Natural killer cell (primary cell): ENCODE measurements at regions of chr17 and their contacts with region 1.

Region 1: DNA sequence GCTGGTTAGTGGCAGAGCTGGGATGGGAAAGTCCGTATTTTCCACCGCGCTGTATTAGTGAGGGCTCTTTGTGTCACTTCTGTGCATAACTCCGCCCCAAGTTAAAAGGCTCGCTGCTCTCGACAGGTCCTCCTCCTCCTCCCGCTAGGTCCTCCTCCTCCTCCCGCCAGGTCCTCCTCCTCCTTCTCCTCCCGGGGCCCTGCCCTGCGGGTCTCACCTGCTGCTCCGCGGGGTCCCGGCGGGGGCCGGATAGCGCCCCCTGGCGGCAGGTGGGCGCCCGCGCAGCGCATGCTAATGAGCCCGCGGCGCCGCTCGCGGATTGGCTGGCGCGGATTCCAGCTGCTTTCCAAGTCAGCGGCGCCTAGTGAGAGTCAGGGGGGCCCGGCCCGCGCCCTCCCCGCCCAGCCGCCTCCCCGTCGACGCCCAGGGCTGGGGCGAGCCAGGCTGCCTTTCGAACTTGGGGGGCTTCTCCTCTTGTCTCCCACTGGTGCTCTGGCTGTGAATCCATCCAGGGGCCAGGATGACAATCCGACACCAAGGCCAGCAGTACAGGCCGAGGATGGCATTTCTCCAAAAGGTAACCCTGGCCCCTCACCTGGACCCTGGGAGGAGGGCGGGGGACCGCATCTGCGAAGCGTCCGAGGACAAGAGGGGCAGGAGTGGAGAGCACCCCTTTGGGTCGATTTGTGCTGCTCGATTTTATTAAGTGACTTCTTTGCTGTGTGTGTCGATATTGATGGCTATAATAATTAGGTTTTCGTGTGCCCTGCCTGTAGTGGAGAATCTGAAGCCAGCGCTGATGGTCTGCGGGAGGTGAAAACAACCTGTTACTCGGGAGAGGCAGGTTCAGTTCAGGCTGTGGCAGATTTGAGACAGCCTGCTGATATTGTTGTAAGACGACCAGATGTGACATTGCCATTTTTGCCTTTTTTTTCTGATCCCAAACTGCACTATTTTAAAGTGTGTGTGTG is at the start of gene RGS9:
- DNase-seq: peak; percentile 89 to 93
- ATAC-seq: peak; percentile 98 to 99 (median 98)
- H3K4me3 ChIP-seq: peak within 1 kb of the TSS; percentile 64
- H3K4me3 Mint-ChIP-seq: peak within 1 kb of the TSS; percentile 97
- H3K27ac ChIP-seq: peak within 1 kb of the TSS; percentile 32
- H3K27ac Mint-ChIP-seq: peak within 1 kb of the TSS; percentile 83 to 89
- H3K4me1 ChIP-seq: peaks cover 35% of the 10 kb centered on the region
- H3K4me1 Mint-ChIP-seq: peaks cover 34 to 49% of the 10 kb centered on the region in 2 donors
- H3K27me3 ChIP-seq: no peaks in the 10 kb centered on the region
- H3K27me3 Mint-ChIP-seq: peaks cover 8 to 9% of the 10 kb centered on the region in 2 donors
- CTCF ChIP-seq: peak; percentile 96
- total RNA-seq, gene RGS9: 25.0 to 47.3 (median 37.2) TPM

Region 2: DNA sequence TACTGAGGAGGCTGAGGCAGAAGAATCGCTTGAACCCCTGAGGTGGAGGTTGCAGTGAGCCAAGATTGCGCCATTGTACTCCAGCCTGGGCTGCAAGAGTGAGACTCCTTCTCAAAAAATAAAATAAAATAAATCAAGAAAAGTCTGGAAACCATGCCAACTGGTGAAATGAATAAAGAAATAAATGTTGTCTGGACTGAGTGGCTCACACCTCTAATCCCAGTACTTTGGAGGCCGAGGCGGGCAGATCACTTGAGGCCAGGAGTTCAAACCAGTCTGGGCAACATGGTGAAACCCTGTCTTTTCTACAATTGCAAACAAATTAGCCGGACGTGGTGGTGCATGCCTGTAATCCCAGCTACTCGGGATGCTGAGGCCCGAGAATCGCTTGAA is 217.3 kb before region 1 on chr17:
- intact Hi-C with region 1: loop called (anchors 1 kb)
- DNase-seq: no peak
- ATAC-seq: no peak
- H3K4me3 ChIP-seq: peak overlapping the region; percentile 76
- H3K4me3 Mint-ChIP-seq: peak overlapping the region; percentile 88
- H3K27ac ChIP-seq: peak overlapping the region; percentile 86
- H3K27ac Mint-ChIP-seq: peak overlapping the region; percentile 85 to 90
- H3K4me1 ChIP-seq: peaks cover 9% of the 10 kb centered on the region
- H3K4me1 Mint-ChIP-seq: no peaks in the 10 kb centered on the region
- H3K27me3 ChIP-seq: no peaks in the 10 kb centered on the region
- H3K27me3 Mint-ChIP-seq: no peaks in the 10 kb centered on the region
- CTCF ChIP-seq: no peak

Region 3: DNA sequence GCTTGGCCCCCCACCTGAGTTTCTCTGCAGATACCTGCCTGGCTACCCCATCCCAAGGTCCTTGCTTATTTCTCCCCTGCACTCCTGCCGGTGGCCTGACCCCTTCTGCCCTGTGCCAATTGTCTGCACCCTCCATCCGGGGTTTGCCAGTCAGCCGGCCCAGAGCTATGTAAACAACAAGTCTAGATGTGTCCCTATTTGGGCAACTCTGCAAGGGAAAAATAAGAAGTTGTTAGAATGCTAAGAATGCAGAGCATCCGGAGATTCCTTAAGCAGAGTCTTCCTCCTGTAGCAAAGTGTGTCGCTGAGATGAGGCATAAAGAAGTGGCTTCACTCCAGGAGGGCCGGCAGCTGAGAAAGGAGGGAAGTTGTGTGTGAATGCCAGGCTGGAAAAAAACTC is 46.4 kb after region 1 on chr17:
- intact Hi-C with region 1: no loop called
- DNase-seq: no peak
- ATAC-seq: no peak
- H3K4me3 ChIP-seq: no peak overlapping the region
- H3K4me3 Mint-ChIP-seq: peak overlapping the region; percentile 41
- H3K27ac ChIP-seq: no peak overlapping the region
- H3K27ac Mint-ChIP-seq: peak overlapping the region; percentile 90 to 92
- H3K4me1 ChIP-seq: peaks cover 43% of the 10 kb centered on the region
- H3K4me1 Mint-ChIP-seq: peaks cover 57 to 60% of the 10 kb centered on the region in 2 donors
- H3K27me3 ChIP-seq: no peaks in the 10 kb centered on the region
- H3K27me3 Mint-ChIP-seq: peaks cover 0 to 3% of the 10 kb centered on the region in 2 donors
- CTCF ChIP-seq: no peak

Region 4: DNA sequence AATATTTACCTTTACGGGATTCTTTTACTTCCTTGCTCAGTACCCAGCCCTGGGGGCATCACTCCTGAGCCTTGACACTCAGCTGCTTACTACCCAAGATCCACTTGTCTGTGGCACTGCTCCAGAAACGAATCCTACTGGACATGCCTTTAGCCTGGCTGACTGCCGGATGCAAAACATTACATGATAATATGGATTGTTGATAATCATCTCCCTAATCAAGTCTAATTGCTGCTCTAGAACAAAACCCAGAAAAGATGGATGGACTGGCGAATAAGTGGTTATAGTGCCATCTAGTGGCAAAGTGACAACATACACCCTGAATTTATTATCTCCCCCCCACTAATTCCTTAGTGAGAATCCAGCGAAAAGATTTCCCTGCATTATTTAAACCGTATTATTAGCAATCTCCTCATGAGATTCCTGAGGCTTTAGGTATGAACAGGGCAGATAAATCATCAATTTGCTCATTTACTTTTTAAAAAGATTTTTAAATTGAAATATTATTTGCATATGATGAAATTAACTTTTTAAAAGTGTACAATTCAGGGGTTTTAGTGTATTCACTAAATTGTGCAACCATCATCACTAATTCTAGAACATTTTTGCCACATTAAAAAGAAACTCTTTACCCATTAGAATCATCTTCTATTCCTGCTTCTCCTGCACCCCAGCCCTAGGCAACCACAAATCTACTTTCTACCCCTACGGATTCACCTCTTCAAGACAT is 61.5 kb after region 1 on chr17:
- intact Hi-C with region 1: loop called (anchors 5 kb)
- DNase-seq: peak in 1 of 2 donors; percentile 77
- ATAC-seq: peak; percentile 69 to 85 (median 82)
- H3K4me3 ChIP-seq: no peak overlapping the region
- H3K4me3 Mint-ChIP-seq: no peak overlapping the region
- H3K27ac ChIP-seq: no peak overlapping the region
- H3K27ac Mint-ChIP-seq: no peak overlapping the region
- H3K4me1 ChIP-seq: peaks cover 3% of the 10 kb centered on the region
- H3K4me1 Mint-ChIP-seq: peaks cover 4% of the 10 kb centered on the region in 2 donors
- H3K27me3 ChIP-seq: no peaks in the 10 kb centered on the region
- H3K27me3 Mint-ChIP-seq: no peaks in the 10 kb centered on the region
- CTCF ChIP-seq: peak; percentile 88